Posterior cingulate gyrus (tissue), 11 donors: ENCODE measurements at regions of chr2 and their contacts with region 1.

Region 1: GRCh38 chr2:58131191-58132011 is 84.8 kb downstream of the VRK2 start:
- DNase-seq: peak in 1 of 10 donors; percentile 9

Region 2: GRCh38 chr2:57759822-57760300 is 371.5 kb before region 1 on chr2:
- intact Hi-C with region 1: loop called (anchors 10 kb)
- DNase-seq: peak; percentile 84 to 99 (median 95)

Region 3: DNA sequence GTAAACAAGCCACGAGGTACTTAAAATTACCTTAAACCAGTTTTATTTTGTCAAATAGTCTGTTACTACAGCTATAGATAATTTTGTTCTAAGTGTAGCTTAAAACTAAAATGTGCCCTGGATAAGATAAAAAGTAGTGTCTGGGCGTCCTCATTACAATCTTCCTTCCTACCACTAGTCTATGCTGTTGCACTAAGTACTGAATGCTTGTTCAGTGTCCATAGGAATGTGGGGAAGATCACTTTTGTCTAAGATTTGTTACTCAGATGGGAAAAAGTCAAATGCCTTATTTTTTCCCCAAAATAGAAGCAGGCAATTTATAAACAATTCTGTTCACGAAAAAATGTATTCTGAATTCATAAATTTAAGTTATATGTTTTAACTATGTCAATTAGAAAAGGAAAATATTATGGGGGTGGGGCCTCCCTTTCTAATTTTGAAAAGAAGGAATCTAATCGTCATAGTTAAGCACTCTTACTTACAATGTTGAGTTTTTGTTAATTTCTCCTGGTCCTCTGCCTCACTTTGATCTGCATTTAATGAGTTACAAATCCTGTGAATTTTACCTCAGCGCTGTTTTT is 225.2 kb before region 1 on chr2:
- intact Hi-C with region 1: loop called (anchors 5 kb)
- DNase-seq: no peak

Region 4: DNA sequence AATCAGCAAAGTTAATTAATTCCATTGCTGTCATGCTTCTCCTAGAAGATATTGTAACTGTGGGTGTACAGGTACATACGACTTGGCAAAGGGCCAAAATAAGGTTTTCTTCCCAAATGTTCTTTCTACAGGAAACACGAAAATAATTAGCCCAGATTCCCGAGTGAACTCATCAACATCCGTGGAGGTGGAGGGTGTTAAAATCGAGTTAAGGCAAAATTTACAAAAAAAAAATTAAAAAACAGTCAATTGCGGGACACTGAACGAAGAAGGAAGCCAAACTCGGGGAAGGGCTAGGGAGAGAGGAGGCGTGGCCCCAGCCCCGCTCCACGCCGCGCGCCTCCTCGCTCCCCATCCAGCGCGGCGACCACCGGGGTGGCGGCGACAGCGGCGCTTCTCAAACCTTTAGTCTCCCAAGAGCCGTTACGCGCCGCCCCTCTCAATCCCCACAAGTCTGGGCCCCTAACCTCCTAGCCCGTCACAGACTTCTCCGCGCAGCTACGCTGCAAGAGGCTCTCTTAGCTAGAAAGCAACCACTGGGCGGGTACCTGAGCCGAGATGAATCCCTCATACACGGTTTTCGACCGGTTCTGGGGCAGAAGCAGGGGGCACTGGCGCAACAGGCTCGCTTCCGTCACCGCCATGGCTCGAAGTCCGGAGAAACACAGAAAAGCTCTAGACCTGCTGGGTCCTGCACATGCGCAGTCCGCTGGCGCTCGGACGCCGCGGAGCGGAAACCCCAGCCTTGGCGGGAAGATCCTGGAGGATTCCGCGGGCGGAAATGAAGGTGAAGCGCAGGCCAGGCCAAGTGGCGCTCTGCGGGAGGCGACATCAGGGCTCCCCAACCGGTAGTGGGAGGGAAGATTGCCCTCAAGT is 109.5 kb after region 1 on chr2 and contains the start of gene FANCL:
- intact Hi-C with region 1: loop called (anchors 10 kb)
- DNase-seq: peak; percentile 84 to 98 (median 91)

Region 5: DNA sequence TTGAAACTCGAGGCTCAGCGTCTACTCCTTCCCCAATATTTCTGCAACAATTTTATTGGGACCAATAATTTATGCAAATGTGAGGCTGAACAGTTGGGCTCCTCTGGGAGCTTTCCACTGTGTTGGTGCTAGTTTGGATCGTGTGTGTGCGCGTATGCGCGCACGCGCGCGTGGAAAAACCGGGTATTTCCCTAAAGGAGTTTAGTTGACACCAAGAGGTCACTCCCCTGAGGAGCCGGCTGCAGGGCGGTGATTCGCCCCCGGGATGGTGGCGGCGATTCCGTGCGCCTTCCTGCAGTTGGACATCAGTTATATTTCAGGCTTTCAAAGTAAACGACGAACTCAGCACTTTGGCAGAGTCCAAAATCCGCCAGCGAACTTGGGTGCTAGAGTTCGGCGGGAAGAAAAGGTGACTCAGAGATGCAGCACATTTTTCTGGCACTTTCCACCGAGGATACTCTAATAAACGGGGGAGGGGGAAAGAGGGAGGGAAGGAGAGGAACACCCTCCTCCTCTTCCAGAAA is 296.2 kb after region 1 on chr2:
- intact Hi-C with region 1: loop called (anchors 5 kb)
- DNase-seq: peak; percentile 43 to 94 (median 64)

Region 6: GRCh38 chr2:58448065-58448507 is 316.7 kb after region 1 on chr2:
- intact Hi-C with region 1: loop called (anchors 1 kb)
- DNase-seq: peak in 7 of 10 donors; percentile 53 to 93 (median 75)

Region 7: DNA sequence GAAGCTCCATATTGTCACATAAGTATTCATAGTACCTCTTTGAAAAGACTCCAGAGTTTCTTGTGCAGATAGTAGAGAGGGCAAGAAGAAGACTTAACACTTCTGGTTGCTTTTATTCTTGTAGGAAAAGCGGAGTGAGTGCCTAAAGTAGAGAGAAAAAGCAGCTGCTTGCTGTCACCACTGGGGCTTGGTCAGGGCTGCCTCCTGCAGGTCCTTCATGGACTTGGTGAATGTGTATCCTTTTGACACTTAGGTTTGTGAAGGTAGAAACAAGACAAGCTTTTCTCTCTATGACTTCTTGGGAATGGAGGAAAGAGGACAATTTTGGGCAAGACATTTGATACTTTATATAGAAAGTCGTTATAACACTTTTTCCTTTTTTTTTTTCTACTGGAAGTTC is 422.5 kb after region 1 on chr2:
- intact Hi-C with region 1: loop called (anchors 5 kb)
- DNase-seq: peak in 6 of 10 donors; percentile 22 to 88 (median 51)